ENCODE measurements at regions of chr1 and their contacts with region 1.

Region 1: DNA sequence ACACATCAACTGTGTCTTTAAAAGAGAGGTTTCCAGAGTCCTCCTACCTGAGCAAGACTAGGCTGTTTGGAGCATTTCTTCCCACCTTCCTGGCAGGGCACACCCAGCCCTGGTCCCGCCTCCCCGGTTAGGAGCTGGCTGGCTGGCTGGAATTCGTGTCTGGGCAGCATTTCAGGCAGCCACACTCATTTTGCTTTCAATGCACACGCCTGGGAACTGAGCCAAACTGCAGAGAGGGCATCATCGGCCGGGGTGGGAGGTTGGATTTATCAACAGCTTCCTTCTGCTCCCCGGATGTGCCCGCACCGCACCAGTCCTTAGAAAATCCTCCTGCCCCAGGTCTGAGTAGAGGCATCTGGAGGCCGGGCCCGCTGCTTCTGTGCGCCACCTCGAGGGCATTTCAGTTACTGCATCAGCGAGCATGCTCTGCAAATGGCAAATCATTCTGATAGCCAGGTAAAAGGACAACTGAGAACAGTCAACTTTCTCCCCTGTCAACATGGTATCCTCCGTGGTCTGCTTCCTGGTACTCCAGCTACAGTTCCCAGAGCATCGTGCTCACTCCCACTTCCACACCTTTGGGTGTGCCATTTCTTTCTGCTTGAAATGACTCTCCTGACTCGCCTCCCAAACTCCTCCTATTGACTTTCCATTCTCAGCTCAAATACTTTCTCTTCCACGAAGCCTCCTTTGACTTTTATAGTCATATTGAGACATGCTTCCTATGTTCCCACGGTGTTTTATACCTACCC is 20.6 kb downstream of the TCEA3 start:
- DNase-seq: peak; percentile 76
- H3K4me3 ChIP-seq: no peak overlapping the region; the same call in 1 of the 2 replicates
- CTCF ChIP-seq: peak; percentile 92

Region 2: GRCh38 chr1:23303524-23303923 is 100.4 kb before region 1 on chr1:
- CTCF ChIA-PET with region 1: interaction called, 11 read pairs
- POLR2A ChIA-PET with region 1: no interaction called
- DNase-seq: no peak
- H3K4me3 ChIP-seq: no peak overlapping the region
- CTCF ChIP-seq: no peak

Region 3: DNA sequence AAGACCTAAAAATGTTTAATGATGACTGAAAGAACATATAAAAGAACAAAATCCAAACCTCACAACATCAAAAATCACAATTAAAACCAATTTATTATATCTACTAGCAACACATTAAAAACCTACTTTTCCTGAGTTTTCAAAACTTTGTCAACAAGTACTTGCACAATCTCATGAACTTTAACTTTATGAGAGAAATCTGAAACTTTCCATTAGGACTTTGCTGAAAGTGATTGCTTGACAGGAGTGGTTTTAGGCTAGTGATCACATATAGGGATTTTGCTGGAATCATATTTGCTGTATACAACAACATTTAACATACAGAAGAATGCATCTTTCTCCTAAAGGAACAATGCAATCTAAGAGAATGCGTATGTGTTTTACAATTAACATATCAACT is 73.1 kb before region 1 on chr1:
- CTCF ChIA-PET with region 1: interaction called, 11 read pairs
- POLR2A ChIA-PET with region 1: no interaction called
- DNase-seq: no peak
- H3K4me3 ChIP-seq: no peak overlapping the region
- CTCF ChIP-seq: no peak

Region 4: DNA sequence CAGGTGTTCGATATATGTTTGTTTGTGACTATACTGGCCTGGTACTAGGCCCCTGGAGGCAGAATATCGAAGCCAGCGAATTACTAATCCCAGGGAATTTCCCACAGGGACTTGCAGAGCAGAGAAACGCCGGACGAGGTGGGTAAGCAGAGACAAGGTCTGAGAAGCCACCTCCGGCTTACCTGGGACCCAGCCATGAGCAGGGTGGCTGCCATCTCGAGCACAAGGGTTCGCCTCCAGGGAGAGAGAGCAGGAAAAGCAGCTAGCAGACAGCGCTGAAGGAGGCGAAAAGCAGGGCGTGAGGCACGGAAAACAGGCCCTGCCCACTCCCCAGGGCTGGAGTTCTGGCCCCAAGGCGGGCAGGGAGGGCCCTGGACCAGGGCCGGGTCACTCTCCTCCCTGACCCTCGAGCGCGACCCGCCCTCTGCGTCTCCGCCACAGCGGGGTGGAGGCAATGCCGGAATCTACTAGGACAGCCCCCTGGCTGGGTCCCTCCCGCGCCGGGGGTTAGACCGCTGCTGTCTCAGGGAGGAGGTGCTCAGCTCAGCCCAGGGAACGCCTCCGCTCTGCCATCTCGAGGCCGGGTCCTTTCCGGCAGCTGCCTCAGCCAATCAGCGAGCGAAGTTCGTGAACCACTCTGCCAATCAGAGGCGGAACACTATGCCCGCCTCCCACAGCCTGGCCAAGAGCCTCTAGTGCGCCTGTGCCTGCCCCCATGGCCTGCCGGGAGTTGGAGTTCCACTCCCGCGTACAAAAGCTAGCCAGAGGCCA is 35.9 kb before region 1 on chr1:
- CTCF ChIA-PET with region 1: interaction called, 31 read pairs
- POLR2A ChIA-PET with region 1: interaction called, 5 read pairs
- DNase-seq: peak; percentile 89
- H3K4me3 ChIP-seq: peak overlapping the region; percentile 90
- CTCF ChIP-seq: no peak

Region 5: DNA sequence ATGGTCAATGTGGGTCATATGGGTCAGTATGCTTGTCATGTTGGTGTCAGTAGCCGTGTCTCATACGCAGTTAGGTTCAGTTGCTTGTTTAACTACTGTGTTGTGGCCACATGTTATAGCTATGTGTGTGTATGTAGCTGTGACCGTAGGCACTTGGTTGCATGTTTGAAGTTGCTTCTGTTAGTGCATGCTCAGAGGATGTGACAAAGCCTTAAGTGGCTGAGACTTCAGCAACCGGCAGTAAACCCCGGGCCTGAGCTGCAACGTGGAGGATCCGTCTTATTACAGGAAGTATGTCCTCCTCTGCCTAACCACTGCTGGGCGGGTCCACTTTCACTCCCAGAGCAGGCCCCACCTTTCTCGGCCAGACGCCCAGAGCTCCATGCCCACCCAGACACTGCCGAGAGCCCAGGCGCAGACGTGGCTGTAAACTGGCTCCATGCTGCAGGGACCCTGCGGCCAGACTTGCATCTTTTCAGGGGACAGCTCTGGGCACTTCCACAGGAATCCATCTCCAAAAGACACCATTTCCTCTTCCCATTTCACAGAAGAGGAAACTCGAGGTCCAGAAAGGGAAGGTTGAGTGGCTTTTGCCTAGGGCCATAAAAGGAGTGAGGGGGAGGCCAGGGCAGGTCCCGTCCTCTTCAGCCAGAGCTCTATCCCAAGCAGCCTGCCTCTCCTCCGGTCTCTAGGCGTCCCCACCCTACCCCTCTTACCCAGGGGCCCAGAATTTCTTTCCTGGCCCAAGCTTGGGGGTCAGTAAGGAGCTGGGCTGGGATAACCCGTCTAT is 18.5 kb after region 1 on chr1:
- CTCF ChIA-PET with region 1: interaction called, 43 read pairs
- POLR2A ChIA-PET with region 1: no interaction called
- DNase-seq: peak; percentile 54
- H3K4me3 ChIP-seq: peak overlapping the region; percentile 70
- CTCF ChIP-seq: no peak